Activated B cell treated with CpG ODN at 0.5 μM for 24 hours (primary cell): ENCODE measurements at regions of chr7 and their contacts with region 1.

Region 1: GRCh38 chr7:44999245-45000095 is 531 bp upstream of the CCM2 start:
- DNase-seq: peak; percentile 94
- ATAC-seq: peak; percentile 85
- H3K4me3 Mint-ChIP-seq: peak overlapping the region; percentile 95
- H3K27ac Mint-ChIP-seq: peak overlapping the region; percentile 94
- H3K4me1 Mint-ChIP-seq: peaks cover 60% of the 10 kb centered on the region
- H3K27me3 Mint-ChIP-seq: no peaks in the 10 kb centered on the region
- CTCF ChIP-seq: no peak

Region 2: DNA sequence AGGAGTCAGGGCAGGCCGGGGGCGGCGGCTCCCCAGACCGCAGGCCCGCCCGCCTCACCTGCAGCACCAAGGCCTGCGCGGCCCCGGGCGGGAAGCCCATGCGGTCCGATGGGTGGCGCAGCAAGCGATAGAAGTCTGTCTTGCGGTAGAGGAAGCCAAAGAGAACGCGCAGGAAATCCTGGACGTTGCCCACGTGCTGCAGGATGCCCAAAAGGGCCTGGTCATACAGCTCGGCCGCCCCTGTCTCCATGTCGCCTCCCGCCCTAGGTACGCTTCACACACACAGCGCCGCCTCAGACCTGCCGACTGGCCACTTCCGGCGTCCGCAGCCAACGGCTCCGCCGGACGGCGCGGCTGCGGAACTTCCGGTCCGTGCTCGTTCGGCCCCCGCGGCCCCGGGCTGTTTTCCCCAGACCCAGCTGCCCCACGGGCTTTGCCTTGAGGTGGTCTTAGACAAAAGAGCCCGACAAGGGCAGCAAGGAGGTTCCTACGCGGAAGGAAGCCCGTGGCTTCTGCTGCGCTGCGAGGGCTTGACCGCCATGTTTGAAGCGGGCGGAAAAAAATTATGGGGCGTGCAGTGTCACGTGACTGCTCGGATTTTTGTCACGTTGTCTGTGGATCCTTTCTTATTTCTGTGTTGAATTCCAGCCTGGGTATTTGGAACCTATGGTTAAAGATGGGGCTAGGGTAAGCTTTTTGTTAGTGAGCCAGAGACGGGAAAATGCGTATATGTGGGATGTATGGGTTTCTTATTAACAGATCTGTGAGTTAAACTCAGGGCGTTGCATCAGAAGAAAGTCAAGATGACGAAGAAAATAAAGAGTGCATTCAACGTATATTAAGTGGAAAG is 508.9 kb before region 1 on chr7 and contains the start of gene NUDCD3:
- CTCF ChIA-PET with region 1: no interaction called
- POLR2A ChIA-PET with region 1: no interaction called
- intact Hi-C with region 1: loop called (anchors 5 kb)
- DNase-seq: peak; percentile 80
- ATAC-seq: peak; percentile 84
- H3K4me3 Mint-ChIP-seq: peak within 1 kb of the TSS; percentile 90
- H3K27ac Mint-ChIP-seq: peak within 1 kb of the TSS; percentile 97
- H3K4me1 Mint-ChIP-seq: peaks cover 46% of the 10 kb centered on the region
- H3K27me3 Mint-ChIP-seq: peaks cover 5% of the 10 kb centered on the region
- CTCF ChIP-seq: no peak
- total RNA-seq, gene NUDCD3: 80.7 and 85.1 TPM in 2 replicates

Region 3: DNA sequence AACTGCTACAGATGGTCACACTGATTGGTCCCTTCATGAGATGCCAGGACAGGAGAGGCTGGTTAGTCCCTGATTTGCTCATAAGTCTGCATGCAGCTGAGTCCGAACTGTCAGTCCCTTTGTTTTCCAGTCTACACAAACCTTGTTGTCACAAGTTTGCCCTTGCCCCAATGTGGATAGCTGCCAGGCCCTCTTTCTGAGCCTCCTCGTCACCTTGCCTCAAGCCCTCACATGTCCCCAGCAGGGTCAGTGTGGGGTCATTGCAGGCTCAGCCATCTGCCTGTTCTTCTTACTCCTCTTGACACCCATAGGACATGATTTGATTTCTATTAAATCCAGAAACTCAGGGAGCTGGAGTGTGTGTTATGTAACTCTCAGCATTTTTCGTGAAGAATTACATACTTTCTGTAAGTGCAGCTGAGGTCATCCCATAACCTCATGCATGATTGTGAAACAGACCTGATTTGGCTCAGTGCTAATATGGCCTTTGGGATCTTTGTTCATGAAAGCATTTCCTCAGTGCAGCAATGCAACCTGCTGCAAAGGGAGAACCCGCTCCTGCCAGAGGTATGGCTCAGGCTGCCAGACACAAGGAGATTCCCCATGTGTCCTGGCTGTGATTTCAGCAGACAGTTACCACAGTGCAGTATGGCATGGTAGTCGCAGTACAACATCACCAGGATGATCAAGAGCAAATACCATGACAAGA is 320.8 kb before region 1 on chr7:
- CTCF ChIA-PET with region 1: no interaction called
- POLR2A ChIA-PET with region 1: no interaction called
- intact Hi-C with region 1: no loop called
- DNase-seq: no peak
- ATAC-seq: no peak
- H3K4me3 Mint-ChIP-seq: no peak overlapping the region
- H3K27ac Mint-ChIP-seq: no peak overlapping the region
- H3K4me1 Mint-ChIP-seq: no peaks in the 10 kb centered on the region
- H3K27me3 Mint-ChIP-seq: no peaks in the 10 kb centered on the region
- CTCF ChIP-seq: no peak

Region 4: DNA sequence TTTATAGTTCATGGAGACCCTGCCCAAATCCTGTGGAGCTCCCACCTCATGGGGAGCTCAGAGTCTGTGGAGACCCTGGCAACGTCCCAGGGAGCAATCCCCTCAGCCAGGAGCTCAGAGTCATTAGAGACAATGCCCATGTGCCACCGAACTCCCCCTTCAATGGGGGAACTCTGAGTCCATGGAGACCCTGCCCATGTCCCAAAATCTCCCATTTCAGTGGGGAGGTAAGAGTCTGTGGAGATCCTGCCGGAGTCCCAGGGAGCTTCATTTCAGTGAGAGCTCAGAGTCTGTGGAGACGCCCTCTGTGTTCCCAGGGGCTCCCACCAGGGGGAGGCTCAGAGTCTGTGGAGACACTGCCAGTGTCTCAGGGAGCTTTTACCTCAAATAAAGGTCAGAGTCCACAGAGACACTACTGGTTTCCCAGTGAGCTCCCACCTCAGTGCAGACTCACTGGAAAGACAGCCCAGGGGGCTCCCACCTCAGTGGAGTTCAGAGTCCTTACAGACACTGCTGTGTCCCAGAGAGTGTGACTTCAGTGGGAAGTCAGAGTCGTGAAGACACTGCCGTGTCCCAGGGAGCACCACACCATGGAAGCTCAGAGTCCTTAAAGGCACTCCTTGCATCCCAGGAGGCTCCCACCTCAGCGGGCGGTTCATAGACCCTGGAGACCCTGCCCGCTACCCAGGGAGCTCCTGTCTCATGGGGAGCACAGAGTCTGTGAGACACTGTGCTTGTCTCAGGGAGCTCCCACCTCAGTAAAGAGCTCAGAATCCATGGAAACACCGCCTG is 25.7 kb before region 1 on chr7:
- CTCF ChIA-PET with region 1: interaction called, 21 read pairs
- POLR2A ChIA-PET with region 1: interaction called, 325 read pairs
- intact Hi-C with region 1: loop called (anchors 1 kb)
- DNase-seq: no peak
- ATAC-seq: peak; percentile 26
- H3K4me3 Mint-ChIP-seq: no peak overlapping the region
- H3K27ac Mint-ChIP-seq: no peak overlapping the region
- H3K4me1 Mint-ChIP-seq: peaks cover 32% of the 10 kb centered on the region
- H3K27me3 Mint-ChIP-seq: no peaks in the 10 kb centered on the region
- CTCF ChIP-seq: no peak

Region 5: GRCh38 chr7:44986218-44987053 is 13.0 kb before region 1 on chr7:
- CTCF ChIA-PET with region 1: interaction called, 3 read pairs
- POLR2A ChIA-PET with region 1: interaction called, 325 read pairs
- intact Hi-C with region 1: loop called (anchors 1 kb)
- DNase-seq: peak; percentile 97
- ATAC-seq: peak; percentile 92
- H3K4me3 Mint-ChIP-seq: peak overlapping the region; percentile 98
- H3K27ac Mint-ChIP-seq: peak overlapping the region; percentile 98
- H3K4me1 Mint-ChIP-seq: peaks cover 58% of the 10 kb centered on the region
- H3K27me3 Mint-ChIP-seq: no peaks in the 10 kb centered on the region
- CTCF ChIP-seq: no peak

Region 6: GRCh38 chr7:45026984-45027773 is 27.7 kb after region 1 on chr7:
- CTCF ChIA-PET with region 1: interaction called, 15 read pairs
- POLR2A ChIA-PET with region 1: interaction called, 129 read pairs
- intact Hi-C with region 1: loop called (anchors 1 kb)
- DNase-seq: peak; percentile 41
- ATAC-seq: peak; percentile 75
- H3K4me3 Mint-ChIP-seq: peak overlapping the region; percentile 83
- H3K27ac Mint-ChIP-seq: peak overlapping the region; percentile 84
- H3K4me1 Mint-ChIP-seq: peaks cover 77% of the 10 kb centered on the region
- H3K27me3 Mint-ChIP-seq: no peaks in the 10 kb centered on the region
- CTCF ChIP-seq: no peak

Region 7: DNA sequence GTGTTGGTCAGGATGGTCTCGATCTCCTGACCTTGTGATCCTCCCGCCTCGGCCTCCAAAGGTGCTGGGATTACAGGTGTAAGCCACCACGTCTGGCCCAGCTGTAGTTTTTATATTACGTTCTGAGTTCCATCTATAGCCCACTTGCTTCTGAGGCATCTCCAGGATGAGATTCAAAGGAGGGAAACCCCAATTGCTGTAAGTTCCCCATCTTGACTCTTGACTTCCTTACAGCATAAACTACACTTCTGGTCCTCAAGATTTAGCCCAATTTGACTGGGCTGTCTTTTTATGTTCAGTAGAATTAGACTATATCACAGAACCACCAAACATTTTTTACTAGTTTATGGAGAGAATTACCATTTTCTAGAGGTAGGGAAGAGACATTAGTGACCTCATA is 44.9 kb after region 1 on chr7:
- CTCF ChIA-PET with region 1: no interaction called
- POLR2A ChIA-PET with region 1: interaction called, 5 read pairs
- intact Hi-C with region 1: loop called (anchors 5 kb)
- DNase-seq: no peak
- ATAC-seq: no peak
- H3K4me3 Mint-ChIP-seq: no peak overlapping the region
- H3K27ac Mint-ChIP-seq: peak overlapping the region; percentile 80
- H3K4me1 Mint-ChIP-seq: peaks cover 35% of the 10 kb centered on the region
- H3K27me3 Mint-ChIP-seq: no peaks in the 10 kb centered on the region
- CTCF ChIP-seq: no peak

Region 8: DNA sequence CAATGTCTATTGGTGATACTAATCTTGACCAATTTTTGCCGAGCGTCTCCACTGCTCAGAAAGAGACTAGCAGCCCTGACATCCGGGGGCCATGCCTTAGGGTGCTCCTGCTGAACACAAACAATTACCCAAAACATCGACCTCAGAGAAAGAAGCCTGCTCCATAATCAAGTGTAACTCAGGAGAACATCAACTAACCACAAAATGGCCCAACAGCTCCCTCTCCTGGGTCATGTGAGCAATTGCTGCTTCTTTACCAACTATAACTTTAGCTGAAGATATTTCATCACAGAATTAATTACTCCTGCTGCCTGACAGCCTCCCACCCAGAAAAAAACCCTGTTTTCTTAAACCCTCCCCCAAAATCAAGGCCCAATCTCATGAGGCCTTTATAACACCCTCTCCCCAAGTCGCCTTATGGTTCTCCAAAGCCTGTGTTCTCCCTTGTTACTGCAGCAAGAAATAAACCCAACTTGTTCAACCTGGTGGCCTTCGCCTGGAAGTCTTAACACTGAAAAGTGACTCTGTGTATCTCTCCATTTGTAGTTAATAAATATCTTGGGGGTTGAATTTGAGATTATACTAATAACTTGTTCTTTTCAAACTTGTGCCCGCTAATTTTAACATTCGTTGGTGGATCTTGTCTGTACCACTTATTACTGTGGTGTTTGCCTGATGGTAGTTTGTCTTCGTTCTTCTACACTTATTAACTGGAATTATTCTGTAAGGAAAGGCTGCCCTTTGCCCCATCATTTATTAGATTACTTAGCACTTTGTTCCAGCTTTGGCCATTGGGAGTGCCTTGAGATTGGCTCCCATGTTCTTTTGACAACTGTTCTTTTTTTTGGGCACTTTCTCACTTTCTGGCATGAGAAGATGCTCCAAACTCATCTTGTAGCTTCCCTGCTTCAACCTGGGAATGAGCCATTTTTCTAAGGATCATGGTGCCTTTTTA is 136.9 kb after region 1 on chr7:
- CTCF ChIA-PET with region 1: interaction called, 4 read pairs
- POLR2A ChIA-PET with region 1: interaction called, 5 read pairs
- intact Hi-C with region 1: loop called (anchors 1 kb)
- DNase-seq: no peak
- ATAC-seq: peak; percentile 92
- H3K4me3 Mint-ChIP-seq: no peak overlapping the region
- H3K27ac Mint-ChIP-seq: no peak overlapping the region
- H3K4me1 Mint-ChIP-seq: peaks cover 11% of the 10 kb centered on the region
- H3K27me3 Mint-ChIP-seq: no peaks in the 10 kb centered on the region
- CTCF ChIP-seq: no peak